ENCODE measurements at regions of chr3 and their contacts with region 1.

Region 1: DNA sequence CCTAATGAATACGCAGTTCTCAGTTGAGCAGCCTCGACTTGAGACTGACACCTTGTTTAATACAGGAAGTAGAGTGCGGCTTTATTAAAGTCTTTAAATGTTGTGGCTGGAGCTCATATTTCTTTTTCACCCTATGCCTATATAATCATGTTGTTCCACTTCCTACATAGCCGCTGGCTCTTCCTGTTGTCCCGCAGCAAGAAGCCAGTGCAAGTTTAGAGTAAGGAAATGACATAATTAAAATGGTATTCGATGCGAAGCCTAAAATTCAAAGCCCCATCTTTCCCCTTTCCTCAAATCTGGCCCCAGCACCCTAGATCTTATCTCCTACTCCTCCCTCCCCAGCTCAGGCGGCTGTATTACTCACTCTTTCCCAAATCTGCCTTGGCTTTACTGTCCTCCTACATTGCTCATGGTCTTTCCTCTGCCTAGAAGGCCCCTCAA is 7.5 kb upstream of the PHLDB2 start:
- DNase-seq: peak; percentile 97
- ATAC-seq: peak; percentile 69
- H3K4me3 ChIP-seq: peak overlapping the region; percentile 29; the same call in 1 of the 2 replicates
- H3K27ac ChIP-seq: peak overlapping the region; percentile 93
- H3K4me1 ChIP-seq: peaks cover 56% of the 10 kb centered on the region
- H3K27me3 ChIP-seq: no peaks in the 10 kb centered on the region
- CTCF ChIP-seq: no peak

Region 2: DNA sequence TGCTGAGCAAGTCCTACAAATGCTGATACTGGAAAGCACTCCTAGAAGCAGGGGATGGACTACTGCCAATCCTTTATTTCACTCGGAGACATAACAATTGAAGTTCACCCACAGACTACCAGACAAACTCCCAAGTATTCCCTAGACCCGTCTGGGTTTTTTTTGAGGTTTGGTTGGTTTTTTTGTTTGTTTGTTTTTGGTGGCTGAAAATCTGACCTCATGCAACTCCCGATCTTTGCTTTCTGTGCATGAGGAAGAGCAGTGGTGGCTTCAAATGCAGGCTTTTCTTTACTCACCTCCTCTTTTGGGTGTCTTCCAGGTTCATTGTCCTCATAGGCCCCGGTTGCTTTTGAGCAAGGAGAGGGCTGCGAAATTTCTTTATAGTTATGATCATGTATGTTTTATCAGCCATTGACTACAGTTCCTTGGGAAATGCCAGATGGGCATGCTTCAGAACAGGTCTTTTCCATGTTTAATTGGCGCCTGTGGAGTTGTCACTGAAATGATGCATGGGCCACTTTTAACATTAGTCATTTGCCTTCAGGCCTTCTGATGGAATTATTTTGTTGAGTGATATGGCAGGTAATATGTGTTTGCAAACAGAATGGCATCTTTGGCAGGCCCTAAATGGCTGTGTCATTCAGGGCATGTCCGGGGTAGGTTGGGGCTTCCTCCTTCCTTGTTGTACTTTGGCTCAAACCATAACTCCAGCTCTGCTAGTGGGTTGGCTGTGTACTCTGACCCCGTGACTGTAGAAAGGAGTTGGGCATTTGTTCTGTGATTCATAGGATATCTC is 175.1 kb before region 1 on chr3:
- CTCF ChIA-PET with region 1: no interaction called
- POLR2A ChIA-PET with region 1: no interaction called
- intact Hi-C with region 1: loop called (anchors 1 kb)
- DNase-seq: peak; percentile 99
- ATAC-seq: peak; percentile 76
- H3K4me3 ChIP-seq: peak overlapping the region; percentile 87
- H3K27ac ChIP-seq: peak overlapping the region; percentile 86
- H3K4me1 ChIP-seq: peaks cover 53% of the 10 kb centered on the region
- H3K27me3 ChIP-seq: no peaks in the 10 kb centered on the region
- CTCF ChIP-seq: no peak

Region 3: GRCh38 chr3:111810909-111811308 is 40.6 kb before region 1 on chr3:
- CTCF ChIA-PET with region 1: no interaction called
- POLR2A ChIA-PET with region 1: no interaction called
- intact Hi-C with region 1: loop called (anchors 1 kb)
- DNase-seq: peak; percentile 98
- ATAC-seq: peak; percentile 80
- H3K4me3 ChIP-seq: peak overlapping the region; percentile 29; the same call in 1 of the 2 replicates
- H3K27ac ChIP-seq: peak overlapping the region; percentile 85
- H3K4me1 ChIP-seq: peaks cover 55% of the 10 kb centered on the region
- H3K27me3 ChIP-seq: no peaks in the 10 kb centered on the region
- CTCF ChIP-seq: no peak

Region 4: DNA sequence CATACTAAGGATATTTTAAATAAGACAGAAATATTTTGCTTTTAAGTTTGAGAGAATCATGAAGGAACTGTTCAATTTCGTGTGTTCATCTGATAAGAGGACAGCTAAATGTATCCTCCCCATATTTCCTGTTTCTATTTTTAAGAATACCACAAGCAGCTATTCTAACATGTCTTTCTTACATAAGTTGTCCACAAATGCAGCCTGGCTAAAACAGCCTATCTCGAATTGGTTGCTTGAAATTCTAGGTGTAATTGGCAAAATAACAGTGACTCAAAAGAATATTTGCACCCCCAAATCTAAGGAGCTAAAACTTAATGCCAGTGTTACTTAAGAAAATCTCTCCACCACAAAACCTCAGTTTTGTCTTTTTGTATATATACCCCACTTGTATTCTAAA is 612.7 kb after region 1 on chr3:
- CTCF ChIA-PET with region 1: no interaction called
- POLR2A ChIA-PET with region 1: no interaction called
- intact Hi-C with region 1: no loop called
- DNase-seq: no peak
- ATAC-seq: no peak
- H3K4me3 ChIP-seq: no peak overlapping the region
- H3K27ac ChIP-seq: no peak overlapping the region
- H3K4me1 ChIP-seq: peaks cover 7% of the 10 kb centered on the region; the same call in 1 of the 2 replicates
- H3K27me3 ChIP-seq: peaks cover 26% of the 10 kb centered on the region
- CTCF ChIP-seq: no peak

Measured in PC-3 (cell line).